ENCODE measurements at regions of chr14 and their contacts with region 1.

Region 1: DNA sequence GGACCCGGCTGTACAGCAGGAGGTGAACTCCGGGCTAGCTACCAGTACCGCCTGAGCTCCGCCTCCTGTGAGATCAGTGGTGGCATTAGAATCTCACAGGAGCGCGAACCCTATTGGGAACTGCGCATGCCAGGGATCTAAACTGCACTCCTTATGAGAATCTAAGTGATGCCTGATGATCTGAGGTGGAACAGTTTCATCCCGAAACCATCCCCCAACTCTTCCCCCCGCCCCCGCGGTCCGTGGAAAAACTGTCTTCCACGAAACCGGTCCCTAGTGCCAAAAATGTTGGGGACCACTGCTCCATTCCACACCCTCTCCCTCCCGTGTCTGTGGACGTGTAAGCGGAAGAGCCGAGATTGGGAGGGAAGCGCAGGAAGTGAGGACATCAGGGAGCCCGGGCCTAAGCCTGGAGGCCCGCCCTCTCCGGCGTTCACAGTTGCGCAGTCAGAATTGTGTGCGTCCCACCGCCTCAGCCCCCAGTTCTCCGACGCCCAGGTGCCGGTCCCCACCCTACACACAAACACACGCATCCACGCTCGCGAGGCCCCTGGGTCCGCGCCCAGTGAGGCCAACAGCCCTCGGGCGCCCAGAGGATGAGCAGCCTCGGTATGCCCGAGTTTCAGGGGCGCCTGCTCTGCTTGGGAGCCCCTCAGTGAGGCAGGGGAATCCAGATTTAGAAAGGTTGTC is 1.8 kb upstream of the RNASE4 start:
- DNase-seq: peak; percentile 92 to 95 (median 92)
- H3K4me3 ChIP-seq: peak overlapping the region; percentile 82
- H3K27ac ChIP-seq: peak overlapping the region; percentile 98
- H3K4me1 ChIP-seq: peaks cover 8% of the 10 kb centered on the region
- H3K27me3 ChIP-seq: no peaks in the 10 kb centered on the region
- CTCF ChIP-seq: peak in 1 of 3 donors; percentile 15
- EP300 ChIP-seq: no peak
- POLR2A ChIP-seq: peak; percentile 99

Region 2: DNA sequence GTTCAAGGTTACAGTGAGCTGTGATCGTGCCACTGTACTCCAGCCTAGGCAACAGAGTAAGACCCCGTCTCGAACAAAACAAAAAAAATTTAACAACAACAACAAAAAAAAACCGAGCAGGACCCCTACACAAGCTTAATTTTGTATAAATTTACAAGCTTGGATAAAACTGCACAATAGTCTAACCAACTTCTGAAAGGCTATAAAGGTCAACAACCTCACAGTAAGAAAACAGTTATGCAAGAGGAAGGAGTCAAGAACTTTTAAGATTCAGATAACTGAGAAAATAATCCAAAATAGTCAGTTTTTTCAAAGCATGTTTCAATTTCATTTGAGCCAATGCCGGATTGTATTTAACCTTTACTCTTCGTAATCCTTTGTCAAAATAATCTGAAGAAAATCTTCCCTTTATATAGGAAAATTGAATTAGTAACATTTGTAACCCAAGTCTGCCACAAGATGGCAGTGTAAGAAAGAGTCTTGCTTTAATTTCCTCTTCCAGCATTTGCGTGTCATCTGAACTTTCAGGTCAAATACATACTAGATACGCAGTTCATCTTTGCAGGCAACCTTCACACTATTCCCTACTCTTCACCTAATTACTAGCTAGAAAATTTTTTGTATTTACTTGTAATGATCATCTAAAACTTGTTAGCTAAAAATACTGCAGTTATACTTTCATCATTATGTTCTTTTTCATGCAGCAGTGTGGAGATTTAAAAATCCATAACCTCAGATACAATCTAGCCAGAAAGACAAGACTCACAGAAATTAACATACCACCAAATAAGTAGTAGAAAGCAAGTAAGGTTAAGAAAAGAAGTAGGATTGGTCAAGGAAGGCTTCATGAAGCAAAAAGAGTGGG is 355.3 kb before region 1 on chr14:
- intact Hi-C with region 1: loop called in 1 of 4 experiments (anchors 10 kb)
- DNase-seq: no peak
- H3K4me3 ChIP-seq: no peak overlapping the region
- H3K27ac ChIP-seq: no peak overlapping the region
- H3K4me1 ChIP-seq: no peaks in the 10 kb centered on the region
- H3K27me3 ChIP-seq: no peaks in the 10 kb centered on the region
- CTCF ChIP-seq: peak; percentile 25 to 81 (median 70)
- EP300 ChIP-seq: no peak
- POLR2A ChIP-seq: no peak

Region 3: GRCh38 chr14:20461274-20462001 is 221.1 kb before region 1 on chr14 and contains the start of gene PIP4P1:
- intact Hi-C with region 1: loop called in 2 of 4 experiments (anchors 2 to 5 kb)
- DNase-seq: peak; percentile 95 to 99 (median 97)
- H3K4me3 ChIP-seq: peak within 1 kb of the TSS; percentile 92
- H3K27ac ChIP-seq: peak within 1 kb of the TSS; percentile 68 to 74
- H3K4me1 ChIP-seq: peaks cover 3% of the 10 kb centered on the region
- H3K27me3 ChIP-seq: no peaks in the 10 kb centered on the region
- CTCF ChIP-seq: no peak
- EP300 ChIP-seq: peak; percentile 94
- POLR2A ChIP-seq: peak; percentile 85
- total RNA-seq, gene PIP4P1: 11.8 to 32.0 (median 24.2) TPM

Region 4: GRCh38 chr14:20624495-20625070 is 58.0 kb before region 1 on chr14:
- intact Hi-C with region 1: loop called in 1 of 4 experiments (anchors 5 kb)
- DNase-seq: peak in 4 of 5 donors; percentile 34 to 48 (median 46)
- H3K4me3 ChIP-seq: no peak overlapping the region
- H3K27ac ChIP-seq: no peak overlapping the region
- H3K4me1 ChIP-seq: peaks cover 11% of the 10 kb centered on the region
- H3K27me3 ChIP-seq: no peaks in the 10 kb centered on the region
- CTCF ChIP-seq: no peak
- EP300 ChIP-seq: no peak
- POLR2A ChIP-seq: no peak

Region 5: DNA sequence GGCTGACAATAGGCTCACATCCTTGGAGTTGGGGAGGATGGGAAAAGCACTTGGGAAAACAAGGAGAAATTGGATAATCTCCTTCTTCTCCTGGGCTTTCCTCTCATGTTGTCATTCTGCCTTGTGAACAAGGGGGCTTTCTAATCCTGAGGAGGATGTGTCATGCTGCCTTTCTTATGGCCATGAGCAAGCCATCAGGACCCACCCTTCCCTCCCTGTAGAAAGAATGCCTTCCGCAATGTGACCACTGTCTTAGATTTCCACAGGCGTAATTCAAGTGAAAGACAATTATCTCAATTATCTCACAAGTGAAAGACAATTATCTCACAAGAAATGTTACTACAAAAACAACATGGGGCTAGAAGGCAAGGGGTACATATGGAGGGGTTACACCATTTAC is 38.1 kb before region 1 on chr14:
- intact Hi-C with region 1: no loop called
- DNase-seq: no peak
- H3K4me3 ChIP-seq: no peak overlapping the region
- H3K27ac ChIP-seq: no peak overlapping the region
- H3K4me1 ChIP-seq: no peaks in the 10 kb centered on the region
- H3K27me3 ChIP-seq: no peaks in the 10 kb centered on the region
- CTCF ChIP-seq: no peak
- EP300 ChIP-seq: no peak
- POLR2A ChIP-seq: no peak

Region 6: DNA sequence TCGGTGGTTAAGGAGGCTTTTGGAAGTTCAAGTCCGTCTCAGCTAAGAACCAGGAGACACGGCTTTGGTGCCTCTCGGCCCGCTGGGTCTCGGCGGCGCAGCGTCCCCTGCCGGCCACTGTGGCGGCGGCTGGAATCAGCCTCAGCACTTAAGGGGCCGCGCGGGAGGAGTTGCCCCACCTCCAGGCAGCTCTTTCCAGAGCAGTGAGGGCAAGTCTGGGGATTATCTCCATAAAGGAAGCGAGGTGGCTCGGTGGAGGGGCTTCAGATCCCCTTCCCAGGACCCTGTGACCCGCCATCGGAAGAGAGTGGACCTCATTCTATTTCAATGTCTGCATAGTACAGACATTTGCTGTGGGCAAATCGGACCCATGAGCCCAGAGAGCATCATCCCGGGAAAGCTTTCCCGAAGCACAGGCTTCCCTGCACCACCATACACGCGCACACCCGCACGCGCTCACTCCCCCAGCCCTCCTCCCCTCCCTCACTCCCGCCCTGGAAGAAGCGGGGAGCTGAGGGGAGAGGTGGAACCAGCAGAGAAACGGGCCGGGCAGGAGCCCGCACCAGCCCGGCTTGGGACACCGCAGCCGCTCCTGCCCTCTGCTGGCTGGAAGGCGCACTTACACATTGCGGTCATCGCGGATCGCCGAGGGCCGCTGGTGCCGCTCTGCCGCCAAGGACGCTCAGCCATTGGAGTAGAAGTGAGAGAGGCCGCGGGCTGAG is 288.6 kb after region 1 on chr14:
- intact Hi-C with region 1: loop called in 1 of 4 experiments (anchors 10 kb)
- DNase-seq: peak; percentile 80 to 92 (median 86)
- H3K4me3 ChIP-seq: peak overlapping the region; percentile 58
- H3K27ac ChIP-seq: peak overlapping the region; percentile 74 to 86
- H3K4me1 ChIP-seq: no peaks in the 10 kb centered on the region
- H3K27me3 ChIP-seq: no peaks in the 10 kb centered on the region
- CTCF ChIP-seq: peak; percentile 83 to 87 (median 83)
- EP300 ChIP-seq: no peak
- POLR2A ChIP-seq: no peak

Region 7: DNA sequence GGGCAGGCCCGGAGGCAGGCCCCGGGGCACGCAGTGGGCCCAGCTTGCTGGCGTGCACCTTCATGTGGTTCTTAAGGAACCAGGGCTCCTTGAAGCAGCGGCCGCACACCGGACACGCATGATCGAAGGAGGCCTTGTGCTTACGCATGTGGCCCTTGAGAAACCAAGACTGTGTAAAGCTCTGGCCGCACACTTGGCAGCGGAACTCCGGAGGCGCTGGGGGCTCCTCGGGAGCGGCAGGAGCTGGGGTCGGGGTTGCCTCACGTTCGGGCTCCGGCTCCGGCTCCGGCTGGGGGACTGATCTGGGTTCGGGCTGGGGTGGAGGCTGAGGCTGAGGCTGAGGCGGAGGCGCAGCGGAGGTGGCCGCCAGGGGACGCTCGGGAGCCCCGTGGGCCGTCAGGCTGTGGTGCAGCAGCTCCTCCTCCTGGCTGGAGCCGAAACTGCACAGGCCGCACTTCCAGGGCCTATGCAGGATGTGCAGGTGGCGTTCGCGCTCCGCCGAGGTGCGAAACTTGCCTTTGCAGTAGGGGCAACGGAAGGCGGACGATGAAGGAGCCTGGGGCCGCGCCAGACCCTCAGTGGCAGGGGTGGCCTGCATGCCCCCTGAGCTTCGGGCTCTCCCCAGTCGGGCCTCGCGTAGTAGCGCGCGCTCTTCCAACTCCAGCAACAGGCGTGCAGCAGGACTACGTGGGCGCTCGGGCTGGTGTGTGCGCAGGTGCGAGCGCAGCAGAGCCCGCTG is 409.9 kb after region 1 on chr14:
- intact Hi-C with region 1: loop called in 1 of 4 experiments (anchors 10 kb)
- DNase-seq: peak; percentile 73 to 92 (median 89)
- H3K4me3 ChIP-seq: no peak overlapping the region
- H3K27ac ChIP-seq: no peak overlapping the region
- H3K4me1 ChIP-seq: no peaks in the 10 kb centered on the region
- H3K27me3 ChIP-seq: no peaks in the 10 kb centered on the region
- CTCF ChIP-seq: peak; percentile 99 to 100 (median 100)
- EP300 ChIP-seq: no peak
- POLR2A ChIP-seq: peak; percentile 53